T-cell (primary cell): ENCODE measurements at regions of chr1 and their contacts with region 1.

Region 1: GRCh38 chr1:210373885-210374599 is 45.3 kb downstream of the HHAT start:
- DNase-seq: peak in 33 of 35 experiments; percentile 5 to 82 (median 32)
- ATAC-seq: peak; percentile 65 to 73 (median 71)
- H3K4me3 ChIP-seq: no peak overlapping the region
- H3K4me3 Mint-ChIP-seq: no peak overlapping the region
- H3K27ac ChIP-seq: peak overlapping the region; percentile 54
- H3K27ac Mint-ChIP-seq: peak overlapping the region; percentile 49 to 68
- H3K4me1 ChIP-seq: peaks cover 0 to 4% of the 10 kb centered on the region in 2 experiments
- H3K4me1 Mint-ChIP-seq: peaks cover 11 to 22% (median 19%) of the 10 kb centered on the region in 3 donors
- H3K27me3 ChIP-seq: no peaks in the 10 kb centered on the region
- H3K27me3 Mint-ChIP-seq: no peaks in the 10 kb centered on the region

Region 2: GRCh38 chr1:210340311-210340710 is 33.7 kb before region 1 on chr1:
- CTCF ChIA-PET with region 1: interaction called in 1 of 2 experiments, 12 read pairs
- POLR2A ChIA-PET with region 1: no interaction called
- DNase-seq: no peak
- ATAC-seq: no peak
- H3K4me3 ChIP-seq: no peak overlapping the region
- H3K4me3 Mint-ChIP-seq: peak overlapping the region in 1 of 3 donors; percentile 9
- H3K27ac ChIP-seq: peak overlapping the region; percentile 15
- H3K27ac Mint-ChIP-seq: peak overlapping the region; percentile 43 to 80
- H3K4me1 ChIP-seq: peaks cover 3 to 22% of the 10 kb centered on the region in 2 experiments
- H3K4me1 Mint-ChIP-seq: peaks cover 16 to 27% (median 21%) of the 10 kb centered on the region in 3 donors
- H3K27me3 ChIP-seq: no peaks in the 10 kb centered on the region
- H3K27me3 Mint-ChIP-seq: no peaks in the 10 kb centered on the region

Region 3: GRCh38 chr1:210400043-210400840 is 26.2 kb after region 1 on chr1:
- CTCF ChIA-PET with region 1: interaction called, 4 to 10 read pairs
- POLR2A ChIA-PET with region 1: interaction called in 1 of 2 experiments, 4 read pairs
- DNase-seq: peak in 22 of 35 experiments; percentile 5 to 57 (median 21)
- ATAC-seq: peak; percentile 63 to 76 (median 69)
- H3K4me3 ChIP-seq: no peak overlapping the region
- H3K4me3 Mint-ChIP-seq: no peak overlapping the region
- H3K27ac ChIP-seq: no peak overlapping the region
- H3K27ac Mint-ChIP-seq: peak overlapping the region in 1 of 2 donors; percentile 75
- H3K4me1 ChIP-seq: peaks cover 0 to 7% of the 10 kb centered on the region in 2 experiments
- H3K4me1 Mint-ChIP-seq: peaks cover 16 to 32% (median 17%) of the 10 kb centered on the region in 3 donors
- H3K27me3 ChIP-seq: no peaks in the 10 kb centered on the region
- H3K27me3 Mint-ChIP-seq: no peaks in the 10 kb centered on the region